H1 (cell line): ENCODE measurements at regions of chr6 and their contacts with region 1.

Region 1: DNA sequence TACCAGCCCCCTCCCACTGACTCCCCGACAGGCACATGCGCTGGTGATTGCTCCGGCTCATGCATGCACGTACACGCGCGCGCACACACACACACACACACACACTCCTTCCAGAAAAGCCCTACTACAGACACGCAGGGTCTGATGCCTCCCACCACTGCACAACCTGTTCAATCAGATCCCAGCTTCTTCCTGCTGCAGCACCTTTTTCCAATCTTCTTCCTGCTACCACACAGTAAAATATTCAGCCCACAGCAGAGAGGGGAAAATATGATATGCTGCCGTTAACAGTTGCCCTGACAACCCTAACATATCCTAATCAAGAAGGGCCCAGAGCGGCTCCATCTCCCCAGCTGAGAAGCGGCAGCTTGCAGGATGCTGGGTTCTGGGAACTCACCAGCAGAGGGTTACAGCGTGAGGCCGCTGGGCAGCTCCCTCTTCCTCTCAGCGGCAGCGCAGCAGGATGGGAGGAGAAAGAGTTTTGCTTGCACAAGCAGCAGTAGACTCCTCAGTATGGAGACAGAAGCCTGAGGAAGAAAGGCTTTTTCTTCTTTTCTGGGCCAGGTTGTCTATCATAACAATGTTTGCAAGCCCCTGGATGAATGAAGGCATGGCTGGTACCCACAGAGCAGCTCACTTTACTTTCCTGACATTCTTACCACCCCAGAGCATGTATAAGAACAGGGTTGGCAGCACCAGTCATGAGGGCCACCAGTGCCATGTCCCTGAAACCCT is 23.9 kb downstream of the MAP7 start:
- DNase-seq: peak; percentile 51 to 72
- H3K4me3 ChIP-seq: peak overlapping the region in 1 of 4 experiments; percentile 11; a peak in 1 of 8 replicates
- H3K27ac ChIP-seq: no peak overlapping the region
- H3K4me1 ChIP-seq: peaks cover 15 to 31% (median 27%) of the 10 kb centered on the region in 4 experiments
- H3K27me3 ChIP-seq: no peaks in the 10 kb centered on the region
- CTCF ChIP-seq: peak; percentile 49 to 64 (median 61)
- EP300 ChIP-seq: no peak
- POLR2A ChIP-seq: no peak
- RAD21 ChIP-seq: peak; percentile 49 to 54

Region 2: DNA sequence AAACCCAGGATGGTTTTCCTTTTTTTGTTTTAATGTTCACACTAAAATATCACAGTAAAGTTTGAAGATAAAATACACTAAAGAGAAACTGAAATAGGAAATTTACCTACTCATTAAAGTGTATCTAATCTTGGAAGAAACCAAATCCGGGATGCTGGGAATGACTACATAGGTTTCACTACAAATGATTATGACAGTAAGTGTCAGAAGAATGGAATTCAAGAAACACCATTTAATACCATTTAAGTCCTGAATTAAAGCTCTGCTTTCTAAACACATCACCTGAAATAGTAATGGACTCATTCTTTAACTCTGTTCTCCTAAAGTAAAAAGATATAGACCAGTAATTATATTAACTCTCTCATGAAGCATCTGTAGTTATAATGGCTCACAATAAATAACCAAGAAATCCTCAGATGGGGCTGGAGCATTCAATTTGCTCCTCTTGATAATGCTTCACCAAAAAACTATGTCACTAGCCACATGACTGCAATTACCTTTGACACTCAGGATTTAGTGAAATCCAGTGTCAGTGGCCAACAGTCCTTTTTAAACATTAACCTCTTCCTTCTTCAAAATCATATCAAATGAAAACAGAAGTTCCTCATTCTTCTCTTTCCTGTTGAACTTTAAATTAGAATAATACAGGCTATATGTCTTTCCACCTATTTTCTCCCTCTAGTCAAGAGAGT is 17.5 kb before region 1 on chr6:
- CTCF ChIA-PET with region 1: interaction called, 10 read pairs
- POLR2A ChIA-PET with region 1: interaction called, 3 read pairs
- DNase-seq: no peak
- H3K4me3 ChIP-seq: no peak overlapping the region
- H3K27ac ChIP-seq: no peak overlapping the region
- H3K4me1 ChIP-seq: peaks cover 0 to 13% (median 6%) of the 10 kb centered on the region in 4 experiments; a peak in 3 of 7 replicates
- H3K27me3 ChIP-seq: no peaks in the 10 kb centered on the region
- CTCF ChIP-seq: no peak
- EP300 ChIP-seq: no peak
- POLR2A ChIP-seq: no peak
- RAD21 ChIP-seq: no peak

Region 3: GRCh38 chr6:136566007-136566496 is 39.7 kb after region 1 on chr6:
- CTCF ChIA-PET with region 1: no interaction called
- POLR2A ChIA-PET with region 1: no interaction called
- DNase-seq: no peak
- H3K4me3 ChIP-seq: no peak overlapping the region
- H3K27ac ChIP-seq: no peak overlapping the region
- H3K4me1 ChIP-seq: no peaks in the 10 kb centered on the region
- H3K27me3 ChIP-seq: no peaks in the 10 kb centered on the region
- CTCF ChIP-seq: no peak
- EP300 ChIP-seq: no peak
- POLR2A ChIP-seq: no peak
- RAD21 ChIP-seq: no peak